PC-3 (cell line): ENCODE measurements at regions of chr4 and their contacts with region 1.

Region 1: GRCh38 chr4:168585168-168586091 is 88.6 kb downstream of the PALLD start:
- DNase-seq: peak; percentile 82
- ATAC-seq: peak; percentile 39
- H3K4me3 ChIP-seq: no peak overlapping the region
- H3K27ac ChIP-seq: peak overlapping the region; percentile 100
- H3K4me1 ChIP-seq: peaks cover 70% of the 10 kb centered on the region
- H3K27me3 ChIP-seq: no peaks in the 10 kb centered on the region
- CTCF ChIP-seq: peak; percentile 72

Region 2: GRCh38 chr4:168183717-168184608 is 401.5 kb before region 1 on chr4:
- CTCF ChIA-PET with region 1: no interaction called
- POLR2A ChIA-PET with region 1: no interaction called
- intact Hi-C with region 1: loop called (anchors 10 kb)
- DNase-seq: peak; percentile 55
- ATAC-seq: peak; percentile 64
- H3K4me3 ChIP-seq: no peak overlapping the region
- H3K27ac ChIP-seq: no peak overlapping the region
- H3K4me1 ChIP-seq: peaks cover 6% of the 10 kb centered on the region
- H3K27me3 ChIP-seq: no peaks in the 10 kb centered on the region
- CTCF ChIP-seq: peak; percentile 78

Region 3: GRCh38 chr4:168514249-168514852 is 71.1 kb before region 1 on chr4:
- CTCF ChIA-PET with region 1: interaction called, 3 read pairs
- POLR2A ChIA-PET with region 1: interaction called, 5 read pairs
- intact Hi-C with region 1: loop called (anchors 2 kb)
- DNase-seq: peak; percentile 71
- ATAC-seq: no peak
- H3K4me3 ChIP-seq: no peak overlapping the region
- H3K27ac ChIP-seq: no peak overlapping the region
- H3K4me1 ChIP-seq: peaks cover 10% of the 10 kb centered on the region; the same call in 1 of the 2 replicates
- H3K27me3 ChIP-seq: no peaks in the 10 kb centered on the region
- CTCF ChIP-seq: peak; percentile 55

Region 4: GRCh38 chr4:168528131-168528949 is 57.1 kb before region 1 on chr4:
- CTCF ChIA-PET with region 1: no interaction called
- POLR2A ChIA-PET with region 1: no interaction called
- intact Hi-C with region 1: no loop called
- DNase-seq: peak; percentile 58
- ATAC-seq: peak; percentile 41; the same call in 1 of the 2 replicates
- H3K4me3 ChIP-seq: no peak overlapping the region
- H3K27ac ChIP-seq: peak overlapping the region; percentile 16; the same call in 1 of the 2 replicates
- H3K4me1 ChIP-seq: peaks cover 22% of the 10 kb centered on the region
- H3K27me3 ChIP-seq: no peaks in the 10 kb centered on the region
- CTCF ChIP-seq: no peak

Region 5: DNA sequence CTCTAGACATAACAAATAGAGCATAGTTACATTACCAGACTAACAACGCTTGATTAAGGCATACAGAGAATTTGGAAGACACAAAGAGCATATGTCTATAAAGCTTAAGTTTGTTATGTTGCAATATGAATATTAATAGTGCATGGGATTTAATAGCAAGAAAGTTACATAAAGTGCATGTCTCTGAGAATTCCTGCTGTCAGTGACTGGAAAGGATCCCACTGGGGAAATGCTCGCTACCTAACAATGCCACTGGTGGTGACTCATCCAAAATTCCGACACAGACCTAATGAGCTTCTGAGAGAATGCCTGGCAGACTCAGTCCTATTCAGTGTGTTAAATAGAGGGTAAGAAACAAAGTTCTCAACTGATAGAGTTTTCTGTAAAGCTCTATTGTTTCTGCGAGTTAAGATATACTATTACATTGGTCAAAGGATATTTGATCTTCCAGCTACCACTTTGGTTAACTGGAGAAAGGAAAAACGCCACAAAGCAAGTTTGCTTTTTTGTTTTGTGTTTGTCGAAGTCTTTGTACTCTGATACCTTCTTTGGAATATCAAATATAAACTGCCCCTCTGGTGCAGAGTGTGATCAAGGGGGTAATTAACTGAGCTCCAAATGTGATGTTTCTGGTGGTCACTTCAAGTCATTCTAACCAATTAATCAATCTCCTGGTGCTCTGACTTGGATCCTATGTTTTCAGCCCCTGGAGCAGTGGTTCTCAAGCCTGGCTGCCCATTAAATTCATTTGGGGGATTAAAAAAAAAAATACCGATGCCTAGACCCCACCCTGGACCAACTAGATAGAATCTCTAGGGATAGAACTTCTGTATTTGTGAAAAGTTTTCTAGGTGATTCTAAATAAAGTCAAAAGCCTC is 19.3 kb after region 1 on chr4:
- CTCF ChIA-PET with region 1: no interaction called
- POLR2A ChIA-PET with region 1: interaction called, 3 read pairs
- intact Hi-C with region 1: loop called (anchors 2 kb)
- DNase-seq: peak; percentile 87
- ATAC-seq: peak; percentile 92
- H3K4me3 ChIP-seq: no peak overlapping the region
- H3K27ac ChIP-seq: peak overlapping the region; percentile 84
- H3K4me1 ChIP-seq: peaks cover 48% of the 10 kb centered on the region
- H3K27me3 ChIP-seq: no peaks in the 10 kb centered on the region
- CTCF ChIP-seq: no peak

Region 6: DNA sequence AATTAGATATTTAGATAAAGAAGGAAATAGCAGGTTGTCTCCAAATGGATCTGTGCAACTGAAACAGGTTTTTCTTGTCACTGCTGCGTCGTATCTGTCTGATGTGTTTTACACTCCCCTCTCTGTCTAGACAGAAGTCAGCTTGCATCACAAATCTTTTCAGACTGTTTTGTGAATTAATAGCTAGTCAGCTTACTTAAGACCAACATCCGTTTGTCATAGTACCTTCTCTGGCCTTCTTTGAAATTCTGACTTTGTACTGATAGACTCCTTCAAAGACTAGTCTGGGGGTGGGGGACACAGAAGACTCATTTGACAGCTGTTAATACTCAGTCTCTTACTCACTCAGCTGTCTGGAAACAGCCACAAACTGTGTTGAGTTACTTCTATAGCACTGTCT is 109.2 kb after region 1 on chr4:
- CTCF ChIA-PET with region 1: interaction called, 5 read pairs
- POLR2A ChIA-PET with region 1: no interaction called
- intact Hi-C with region 1: loop called (anchors 5 kb)
- DNase-seq: peak; percentile 58
- ATAC-seq: no peak
- H3K4me3 ChIP-seq: no peak overlapping the region
- H3K27ac ChIP-seq: peak overlapping the region; percentile 33
- H3K4me1 ChIP-seq: peaks cover 34% of the 10 kb centered on the region
- H3K27me3 ChIP-seq: no peaks in the 10 kb centered on the region
- CTCF ChIP-seq: no peak

Region 7: GRCh38 chr4:168831919-168832762 is 246.7 kb after region 1 on chr4:
- CTCF ChIA-PET with region 1: interaction called, 3 read pairs
- POLR2A ChIA-PET with region 1: no interaction called
- intact Hi-C with region 1: loop called (anchors 5 kb)
- DNase-seq: peak; percentile 78
- ATAC-seq: peak; percentile 80
- H3K4me3 ChIP-seq: peak overlapping the region; percentile 96
- H3K27ac ChIP-seq: peak overlapping the region; percentile 44
- H3K4me1 ChIP-seq: peaks cover 21% of the 10 kb centered on the region; the same call in 1 of the 2 replicates
- H3K27me3 ChIP-seq: no peaks in the 10 kb centered on the region
- CTCF ChIP-seq: no peak